ENCODE measurements at regions of chr5 and their contacts with region 1.

Region 1: DNA sequence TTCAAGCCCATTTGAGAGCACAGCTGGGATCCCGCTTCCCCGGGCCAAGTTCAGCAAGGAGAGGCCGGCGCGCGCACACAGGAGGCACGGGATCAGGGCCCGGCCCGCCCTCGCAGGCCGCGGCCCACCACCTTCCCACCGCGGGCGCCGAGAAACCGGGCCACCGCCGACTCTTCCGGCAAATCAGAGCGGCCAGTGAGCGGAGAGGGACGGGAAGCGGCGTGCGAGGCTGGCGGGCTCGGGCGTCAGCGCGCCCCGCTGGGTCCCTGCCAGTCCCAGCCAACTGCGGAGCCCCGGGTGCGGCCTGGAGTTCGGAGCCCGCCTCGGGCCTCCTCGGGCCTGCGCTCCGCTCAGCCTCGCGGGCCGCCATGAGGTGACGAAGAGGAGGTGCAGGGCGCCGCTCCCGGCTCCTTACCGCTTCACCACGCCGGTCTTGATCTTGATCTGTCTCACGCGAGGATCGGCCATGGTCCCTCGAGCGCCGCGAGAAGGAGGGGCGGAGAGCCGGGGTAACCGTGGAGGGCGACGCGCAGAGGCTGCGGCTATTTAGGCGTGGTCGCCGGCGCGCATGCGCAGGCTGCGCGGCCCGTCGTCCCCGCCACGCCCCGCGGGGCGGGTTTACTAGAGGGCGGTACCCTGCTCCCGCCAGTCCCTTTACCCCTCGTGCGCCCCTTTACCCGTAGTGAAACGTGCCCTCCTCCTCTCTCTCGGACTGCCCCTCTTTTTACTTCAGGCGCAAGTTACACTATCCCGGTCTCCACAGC is at the start of gene TBCA:
- DNase-seq: peak; percentile 90
- H3K4me3 Mint-ChIP-seq: peak within 1 kb of the TSS; percentile 89
- H3K27ac Mint-ChIP-seq: peak within 1 kb of the TSS; percentile 95
- H3K4me1 Mint-ChIP-seq: peaks cover 44% of the 10 kb centered on the region
- H3K27me3 Mint-ChIP-seq: no peaks in the 10 kb centered on the region
- total RNA-seq, gene TBCA: 206 to 220 TPM

Region 2: GRCh38 chr5:77379558-77380061 is 396.4 kb before region 1 on chr5:
- CTCF ChIA-PET with region 1: no interaction called
- POLR2A ChIA-PET with region 1: no interaction called
- intact Hi-C with region 1: loop called (anchors 2 kb)
- DNase-seq: peak; percentile 81
- H3K4me3 Mint-ChIP-seq: no peak overlapping the region
- H3K27ac Mint-ChIP-seq: peak overlapping the region; percentile 64
- H3K4me1 Mint-ChIP-seq: peaks cover 31% of the 10 kb centered on the region
- H3K27me3 Mint-ChIP-seq: peaks cover 3% of the 10 kb centered on the region

Region 3: DNA sequence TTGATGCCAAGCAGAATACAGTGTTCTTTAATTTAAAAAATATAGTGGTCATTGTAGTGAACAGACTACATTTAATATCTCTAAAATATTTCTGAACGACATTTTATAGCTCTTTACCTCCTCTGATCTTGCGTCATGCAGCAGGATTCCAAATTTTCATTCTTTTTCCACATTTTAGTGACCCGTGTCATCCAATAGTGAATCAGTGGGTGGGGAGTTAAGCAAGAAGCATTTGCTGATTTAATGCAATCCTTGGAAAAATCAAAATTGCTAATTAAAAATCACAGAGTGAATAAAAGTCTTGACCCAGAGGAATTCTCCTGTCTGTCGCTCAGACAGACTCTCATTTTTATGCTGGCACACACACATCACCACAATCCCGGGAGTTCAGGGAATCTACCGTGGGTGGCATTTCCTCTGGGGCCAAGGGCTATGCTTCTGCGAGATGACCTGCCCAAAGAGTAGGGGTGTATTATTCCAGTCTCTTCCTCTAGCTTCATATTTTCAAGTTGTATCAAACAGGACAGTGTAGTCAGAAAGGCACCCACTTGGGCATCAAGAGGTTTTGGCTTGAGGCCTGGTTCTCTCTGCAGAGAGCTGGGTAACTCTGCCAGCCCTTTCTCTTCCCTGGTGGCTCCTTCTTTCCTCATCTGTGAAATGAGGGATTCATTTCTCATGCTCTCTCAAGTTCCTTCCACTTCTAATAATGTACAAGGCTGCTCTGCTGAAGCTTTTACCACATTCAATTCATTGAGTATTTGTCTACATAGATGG is 112.7 kb before region 1 on chr5:
- CTCF ChIA-PET with region 1: no interaction called
- POLR2A ChIA-PET with region 1: interaction called, 3 read pairs
- intact Hi-C with region 1: loop called (anchors 2 kb)
- DNase-seq: no peak
- H3K4me3 Mint-ChIP-seq: no peak overlapping the region
- H3K27ac Mint-ChIP-seq: no peak overlapping the region
- H3K4me1 Mint-ChIP-seq: peaks cover 16% of the 10 kb centered on the region
- H3K27me3 Mint-ChIP-seq: peaks cover 11% of the 10 kb centered on the region

Region 4: DNA sequence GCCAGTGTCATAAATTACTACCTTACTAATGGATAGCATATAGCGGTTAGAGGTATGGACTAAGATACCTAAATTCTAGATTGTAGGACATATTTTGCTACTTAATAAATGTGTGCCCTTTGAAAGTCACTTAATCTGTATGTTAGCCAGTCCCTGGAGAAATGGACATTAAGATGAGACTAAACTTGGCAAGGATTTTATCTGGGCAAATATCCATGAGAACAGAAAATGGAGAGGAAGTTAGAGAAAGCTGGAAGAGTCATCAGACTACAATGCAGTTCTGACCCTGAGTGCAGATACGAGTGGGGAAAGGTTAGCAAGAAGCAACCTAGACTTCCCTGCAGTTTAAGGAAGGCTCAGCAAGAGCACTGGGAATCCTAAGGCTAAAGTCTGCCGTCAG is 32.8 kb before region 1 on chr5:
- CTCF ChIA-PET with region 1: no interaction called
- POLR2A ChIA-PET with region 1: no interaction called
- intact Hi-C with region 1: no loop called
- DNase-seq: no peak
- H3K4me3 Mint-ChIP-seq: no peak overlapping the region
- H3K27ac Mint-ChIP-seq: no peak overlapping the region
- H3K4me1 Mint-ChIP-seq: peaks cover 9% of the 10 kb centered on the region
- H3K27me3 Mint-ChIP-seq: no peaks in the 10 kb centered on the region

Region 5: GRCh38 chr5:77882670-77883257 is 106.8 kb after region 1 on chr5:
- CTCF ChIA-PET with region 1: no interaction called
- POLR2A ChIA-PET with region 1: no interaction called
- intact Hi-C with region 1: loop called (anchors 1 kb)
- DNase-seq: peak; percentile 74
- H3K4me3 Mint-ChIP-seq: no peak overlapping the region
- H3K27ac Mint-ChIP-seq: peak overlapping the region; percentile 85
- H3K4me1 Mint-ChIP-seq: peaks cover 30% of the 10 kb centered on the region
- H3K27me3 Mint-ChIP-seq: peaks cover 15% of the 10 kb centered on the region

Region 6: GRCh38 chr5:78359831-78360673 is 584.1 kb after region 1 on chr5 and contains the start of gene SCAMP1:
- CTCF ChIA-PET with region 1: no interaction called
- POLR2A ChIA-PET with region 1: no interaction called
- intact Hi-C with region 1: loop called (anchors 5 kb)
- DNase-seq: peak; percentile 94
- H3K4me3 Mint-ChIP-seq: peak within 1 kb of the TSS; percentile 94
- H3K27ac Mint-ChIP-seq: peak within 1 kb of the TSS; percentile 96
- H3K4me1 Mint-ChIP-seq: peaks cover 38% of the 10 kb centered on the region
- H3K27me3 Mint-ChIP-seq: no peaks in the 10 kb centered on the region
- total RNA-seq, gene SCAMP1: 13.6 to 18.3 TPM

Measured in activated CD4-positive, alpha-beta memory T cell treated with anti-CD3 and anti-CD28 coated beads for 36 hours (primary cell).